Activated naive CD4-positive, alpha-beta T cell treated with anti-CD3 and anti-CD28 coated beads, Interleukin-2, amount 10 ng/mL, durations not matched to agents 7 days and 5 days (primary cell): ENCODE measurements at regions of chr6 and their contacts with region 1.

Region 1: DNA sequence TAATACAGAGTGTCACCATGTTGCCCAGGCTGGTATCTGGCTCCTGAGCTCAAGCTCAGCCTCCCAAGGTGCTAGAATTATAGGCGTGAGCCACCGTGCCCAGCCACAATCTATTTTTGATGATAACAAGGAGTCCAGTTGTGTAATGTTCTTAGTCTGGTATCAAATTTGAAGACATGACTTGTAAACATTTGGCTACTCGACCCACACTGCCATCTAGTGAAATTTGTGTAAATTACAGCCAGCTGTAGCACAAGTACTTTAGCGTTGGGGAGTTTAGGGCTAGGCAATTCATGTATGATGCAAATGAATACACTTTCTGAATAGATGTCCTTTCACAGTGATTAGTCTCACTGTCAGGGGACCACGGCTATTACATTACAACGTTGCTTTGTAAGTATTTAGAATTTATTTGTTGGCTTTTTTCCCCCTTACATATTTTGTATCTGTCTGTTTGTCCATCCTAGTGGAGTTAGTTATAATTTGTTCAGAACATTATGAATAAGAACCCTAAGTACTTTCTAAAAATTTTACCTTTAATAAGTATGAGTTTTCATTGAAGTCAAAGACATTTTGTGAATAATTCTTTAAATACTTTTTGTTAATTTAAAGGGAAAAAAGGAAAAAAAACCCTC is 139.7 kb downstream of the PRDM13 start:
- DNase-seq: peak; percentile 65
- H3K4me3 Mint-ChIP-seq: no peak overlapping the region
- H3K27ac Mint-ChIP-seq: no peak overlapping the region
- H3K4me1 Mint-ChIP-seq: no peaks in the 10 kb centered on the region
- H3K27me3 Mint-ChIP-seq: peaks cover 20% of the 10 kb centered on the region

Region 2: GRCh38 chr6:99330159-99330558 is 416.2 kb before region 1 on chr6:
- CTCF ChIA-PET with region 1: interaction called, 10 read pairs
- DNase-seq: peak; percentile 72
- H3K4me3 Mint-ChIP-seq: no peak overlapping the region
- H3K27ac Mint-ChIP-seq: no peak overlapping the region
- H3K4me1 Mint-ChIP-seq: peaks cover 2% of the 10 kb centered on the region
- H3K27me3 Mint-ChIP-seq: no peaks in the 10 kb centered on the region

Region 3: DNA sequence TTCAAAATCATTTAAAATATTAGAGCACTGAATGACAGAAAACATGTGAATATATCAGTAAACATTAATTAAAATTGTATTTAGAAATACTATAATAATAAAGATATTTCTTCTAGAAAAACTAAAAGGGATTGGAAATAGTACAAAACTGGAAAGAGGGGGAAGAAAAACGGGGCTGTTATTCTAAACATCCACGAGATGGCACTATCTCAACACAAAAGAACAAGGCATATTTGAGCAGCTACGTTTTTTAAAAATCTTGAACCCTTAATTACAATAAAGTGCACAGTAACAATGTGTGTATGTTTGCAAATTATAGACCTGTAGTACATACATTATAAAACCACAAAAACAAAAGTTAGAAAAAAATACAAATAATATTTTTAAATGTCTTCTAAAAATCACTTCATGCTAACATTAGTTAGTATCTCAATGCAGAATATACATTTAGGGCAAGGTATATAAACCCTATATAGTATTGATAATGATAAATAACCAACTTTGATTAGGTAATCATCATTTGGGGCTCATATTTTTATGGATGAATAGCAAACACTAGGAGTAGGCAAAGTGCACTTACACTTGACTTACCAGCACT is 278.8 kb before region 1 on chr6:
- CTCF ChIA-PET with region 1: interaction called, 23 read pairs
- DNase-seq: no peak
- H3K4me3 Mint-ChIP-seq: no peak overlapping the region
- H3K27ac Mint-ChIP-seq: no peak overlapping the region
- H3K4me1 Mint-ChIP-seq: no peaks in the 10 kb centered on the region
- H3K27me3 Mint-ChIP-seq: no peaks in the 10 kb centered on the region

Region 4: DNA sequence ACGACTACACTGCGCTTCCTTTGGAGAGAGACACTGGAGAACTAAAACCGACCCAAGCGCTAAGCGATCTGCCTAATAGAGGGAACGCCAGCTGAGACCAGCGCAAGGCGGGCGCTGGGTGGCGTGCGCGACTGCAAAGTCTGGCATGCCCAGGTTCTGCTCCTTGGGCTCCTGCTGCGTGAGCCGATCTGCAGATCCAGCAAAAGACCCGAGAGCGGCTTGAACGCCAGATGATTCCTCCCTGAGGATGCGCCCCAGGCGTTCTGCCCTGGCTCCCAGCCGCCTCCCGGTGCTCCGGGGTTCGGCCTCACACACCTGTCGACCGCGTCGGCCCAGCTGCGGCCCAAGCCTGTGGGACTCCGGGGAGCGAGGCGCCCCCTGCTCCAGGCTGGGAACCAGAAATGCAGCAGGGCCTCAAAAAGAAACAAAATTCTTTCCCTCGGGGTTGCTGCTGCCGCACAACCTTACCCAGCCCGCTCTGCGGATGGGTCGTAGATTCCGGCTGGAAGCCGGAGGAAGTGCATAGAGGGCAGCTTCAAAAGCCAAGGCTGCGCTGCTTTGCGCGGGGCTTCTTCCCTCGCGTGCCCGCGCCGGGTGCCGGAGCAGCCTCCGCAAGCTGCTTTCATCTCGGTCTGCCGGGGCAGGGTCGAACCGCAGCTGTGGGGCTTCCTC is 157.6 kb before region 1 on chr6:
- CTCF ChIA-PET with region 1: interaction called, 19 read pairs
- DNase-seq: peak; percentile 80
- H3K4me3 Mint-ChIP-seq: peak overlapping the region; percentile 78
- H3K27ac Mint-ChIP-seq: no peak overlapping the region
- H3K4me1 Mint-ChIP-seq: peaks cover 37% of the 10 kb centered on the region
- H3K27me3 Mint-ChIP-seq: peaks cover 89% of the 10 kb centered on the region

Region 5: GRCh38 chr6:99618649-99619408 is 127.5 kb before region 1 on chr6:
- CTCF ChIA-PET with region 1: no interaction called
- DNase-seq: no peak
- H3K4me3 Mint-ChIP-seq: no peak overlapping the region
- H3K27ac Mint-ChIP-seq: peak overlapping the region; percentile 10
- H3K4me1 Mint-ChIP-seq: peaks cover 9% of the 10 kb centered on the region
- H3K27me3 Mint-ChIP-seq: peaks cover 81% of the 10 kb centered on the region

Region 6: DNA sequence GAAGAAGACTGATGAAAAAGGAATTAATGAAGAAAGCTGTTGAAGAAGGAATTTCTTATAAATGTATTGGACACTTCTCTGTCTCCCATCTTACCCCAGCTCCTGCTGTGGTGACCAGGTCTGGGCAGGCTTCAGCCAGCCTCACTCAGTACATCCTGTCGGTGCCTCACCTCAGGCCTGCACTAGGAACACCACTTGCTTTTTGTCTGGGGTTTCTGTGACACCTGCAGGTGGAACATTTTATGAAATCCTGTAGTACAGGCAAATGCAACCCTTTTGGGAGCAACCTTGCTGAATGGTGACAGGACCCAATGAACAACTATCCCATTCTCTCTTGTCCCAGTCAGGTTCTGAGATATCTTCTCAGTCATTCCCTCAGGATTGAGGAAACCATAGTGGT is 10.1 kb before region 1 on chr6:
- CTCF ChIA-PET with region 1: interaction called, 11 read pairs
- DNase-seq: no peak
- H3K4me3 Mint-ChIP-seq: no peak overlapping the region
- H3K27ac Mint-ChIP-seq: no peak overlapping the region
- H3K4me1 Mint-ChIP-seq: no peaks in the 10 kb centered on the region
- H3K27me3 Mint-ChIP-seq: peaks cover 14% of the 10 kb centered on the region